ENCODE measurements at regions of chr15 and their contacts with region 1.

Region 1: DNA sequence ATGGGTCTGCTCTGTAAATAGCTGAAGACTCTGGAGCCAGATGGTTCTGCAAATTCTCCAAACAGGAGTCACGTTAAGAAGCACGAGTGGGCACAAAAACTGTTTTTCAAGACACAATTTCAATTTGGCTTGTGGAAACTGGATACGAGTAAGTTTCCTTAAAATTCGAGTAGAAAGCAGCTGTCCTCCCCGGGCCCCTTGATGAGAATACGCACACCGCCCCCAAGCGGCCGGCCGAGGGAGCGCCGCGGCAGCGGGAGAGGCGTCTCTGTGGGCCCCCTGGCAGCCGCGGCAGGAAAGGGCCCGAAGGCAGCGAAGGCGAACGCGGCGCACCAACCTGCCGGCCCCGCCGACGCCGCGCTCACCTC is 778 bp upstream of the THBS1 start:
- DNase-seq: peak; percentile 98
- H3K4me3 ChIP-seq: peak overlapping the region; percentile 95
- CTCF ChIP-seq: peak; percentile 93

Region 2: DNA sequence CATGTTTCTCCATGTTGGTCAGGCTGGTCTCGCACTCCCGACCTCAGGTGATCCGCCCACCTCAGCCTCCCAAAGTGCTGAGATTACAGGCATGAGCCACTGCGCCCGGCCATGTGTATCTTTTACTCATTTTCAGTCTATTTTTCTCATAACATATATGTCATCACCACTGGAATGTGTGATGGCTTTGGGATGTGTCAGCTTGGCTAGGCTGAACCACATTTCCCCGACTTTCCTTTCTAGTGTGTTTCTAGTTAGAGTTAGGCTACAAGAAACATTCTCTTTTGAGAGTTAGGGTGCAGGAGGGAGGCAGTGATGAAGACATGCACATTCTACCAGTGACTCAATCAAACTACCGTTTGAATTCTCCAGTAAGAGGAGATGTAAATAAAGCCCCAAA is 444.1 kb before region 1 on chr15:
- CTCF ChIA-PET with region 1: interaction called, 7 read pairs
- POLR2A ChIA-PET with region 1: interaction called, 10 read pairs
- DNase-seq: peak; percentile 93
- H3K4me3 ChIP-seq: no peak overlapping the region
- CTCF ChIP-seq: no peak

Region 3: DNA sequence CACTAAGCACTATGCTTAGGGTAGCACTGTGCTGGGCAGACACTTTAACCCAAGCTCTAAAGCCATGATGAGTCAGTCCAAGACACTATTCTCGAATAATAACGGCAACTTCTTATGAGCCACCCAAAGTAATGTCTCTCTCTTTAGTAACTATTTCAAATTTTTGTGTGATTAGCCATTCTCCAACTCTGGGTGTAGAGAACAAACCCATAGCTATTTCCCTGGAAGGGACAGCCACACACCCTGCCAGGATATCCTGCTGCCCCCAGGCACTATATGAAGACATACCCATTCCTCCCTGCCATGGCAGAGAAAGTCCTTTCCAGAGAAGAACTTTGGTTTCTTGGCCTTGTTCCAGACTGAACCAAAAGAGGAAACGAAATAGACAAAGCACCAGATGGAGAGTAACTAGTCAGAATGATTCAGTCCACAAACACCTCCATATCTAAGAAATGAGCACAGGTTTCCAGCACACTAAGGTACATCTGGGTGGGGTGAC is 384.1 kb before region 1 on chr15:
- CTCF ChIA-PET with region 1: interaction called, 6 read pairs
- POLR2A ChIA-PET with region 1: interaction called, 33 read pairs
- DNase-seq: peak; percentile 70
- H3K4me3 ChIP-seq: no peak overlapping the region
- CTCF ChIP-seq: no peak

Region 4: GRCh38 chr15:39270934-39271333 is 309.2 kb before region 1 on chr15:
- CTCF ChIA-PET with region 1: interaction called, 6 read pairs
- POLR2A ChIA-PET with region 1: interaction called, 40 read pairs
- DNase-seq: peak; percentile 97
- H3K4me3 ChIP-seq: no peak overlapping the region
- CTCF ChIP-seq: no peak

Region 5: DNA sequence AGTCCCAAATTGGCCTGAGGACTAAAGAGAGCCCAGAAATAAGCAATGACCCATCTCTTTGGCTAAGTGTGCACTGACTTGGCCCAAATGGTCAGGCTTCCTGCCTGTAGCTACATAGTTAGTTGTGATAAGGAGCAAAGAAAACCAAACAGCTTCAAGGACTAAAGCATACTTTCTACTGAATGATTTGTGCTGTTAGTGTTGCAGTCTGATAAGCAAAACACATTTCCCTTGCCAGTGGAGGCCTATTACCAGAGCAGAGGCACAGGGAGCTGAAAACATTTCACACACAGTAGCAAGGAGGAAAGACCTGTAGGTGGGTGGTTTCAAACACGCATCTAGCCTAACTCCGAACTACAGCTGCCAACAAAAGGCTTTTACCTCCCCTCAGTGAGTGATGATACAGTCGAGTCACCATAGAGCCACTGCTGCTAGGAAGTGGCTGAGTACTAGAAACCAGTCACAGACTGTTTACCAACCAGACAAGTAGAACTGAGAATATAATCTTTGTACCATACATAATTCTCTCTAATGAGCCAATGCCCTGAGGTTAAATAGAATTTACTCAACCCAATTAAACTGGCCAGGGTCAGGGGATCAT is 221.6 kb before region 1 on chr15:
- CTCF ChIA-PET with region 1: interaction called, 10 read pairs
- POLR2A ChIA-PET with region 1: interaction called, 77 read pairs
- DNase-seq: no peak
- H3K4me3 ChIP-seq: no peak overlapping the region
- CTCF ChIP-seq: no peak

Region 6: GRCh38 chr15:39511000-39511915 is 68.8 kb before region 1 on chr15:
- CTCF ChIA-PET with region 1: interaction called, 3 read pairs
- POLR2A ChIA-PET with region 1: interaction called, 17 read pairs
- DNase-seq: peak; percentile 62
- H3K4me3 ChIP-seq: peak overlapping the region; percentile 21
- CTCF ChIP-seq: no peak